ENCODE measurements at regions of chr14 and their contacts with region 1.

Region 1: GRCh38 chr14:64914237-64914971 is at the start of gene CHURC1:
- DNase-seq: peak; percentile 93
- H3K4me3 Mint-ChIP-seq: peak within 1 kb of the TSS; percentile 88
- H3K27ac Mint-ChIP-seq: peak within 1 kb of the TSS; percentile 94
- H3K4me1 Mint-ChIP-seq: peaks cover 51% of the 10 kb centered on the region
- H3K27me3 Mint-ChIP-seq: peaks cover 5% of the 10 kb centered on the region
- total RNA-seq, gene CHURC1: 50.7 and 51.3 TPM in 2 replicates

Region 2: DNA sequence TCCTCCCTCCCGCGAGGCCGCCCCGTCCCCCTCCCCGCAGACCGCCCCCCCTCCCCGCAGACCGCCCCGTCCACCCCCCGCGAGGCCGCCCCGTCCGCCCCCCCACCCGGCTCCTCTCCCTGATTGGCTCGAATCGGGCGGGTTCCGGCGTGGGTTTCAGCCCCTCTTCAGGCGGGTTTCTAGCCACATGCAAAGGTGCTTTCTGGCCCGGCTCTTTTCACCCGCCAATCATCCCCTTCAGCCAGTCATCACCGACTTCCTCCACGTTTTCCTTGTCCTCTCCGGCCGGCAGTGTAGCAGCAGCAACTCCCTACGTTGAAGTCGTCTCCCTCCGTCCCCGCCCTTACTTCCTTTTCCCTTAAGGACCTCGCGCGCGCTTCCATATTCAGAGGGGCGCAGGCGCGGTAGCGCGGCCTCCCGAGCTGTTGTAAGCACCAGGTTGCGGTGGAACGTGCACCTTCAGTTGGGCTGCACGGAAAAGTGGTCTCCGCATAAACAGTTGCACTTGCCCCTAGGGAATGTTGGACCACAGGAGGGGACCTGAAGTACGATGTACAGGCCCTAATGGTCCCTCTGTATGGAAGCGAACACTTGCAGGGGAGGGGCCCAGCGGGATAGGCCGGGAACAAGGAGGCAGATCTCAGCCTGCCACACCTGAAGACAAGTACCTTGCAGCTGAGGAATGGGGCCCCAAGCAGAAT is 575.6 kb before region 1 on chr14:
- intact Hi-C with region 1: loop called (anchors 1 kb)
- DNase-seq: peak; percentile 85
- H3K4me3 Mint-ChIP-seq: peak overlapping the region; percentile 81
- H3K27ac Mint-ChIP-seq: peak overlapping the region; percentile 84
- H3K4me1 Mint-ChIP-seq: peaks cover 29% of the 10 kb centered on the region
- H3K27me3 Mint-ChIP-seq: no peaks in the 10 kb centered on the region

Region 3: GRCh38 chr14:64708148-64709004 is 206.0 kb before region 1 on chr14:
- intact Hi-C with region 1: loop called (anchors 5 kb)
- DNase-seq: peak; percentile 57
- H3K4me3 Mint-ChIP-seq: peak overlapping the region; percentile 47
- H3K27ac Mint-ChIP-seq: peak overlapping the region; percentile 83
- H3K4me1 Mint-ChIP-seq: peaks cover 70% of the 10 kb centered on the region
- H3K27me3 Mint-ChIP-seq: peaks cover 10% of the 10 kb centered on the region

Region 4: GRCh38 chr14:64880221-64881121 is 33.9 kb before region 1 on chr14:
- intact Hi-C with region 1: loop called (anchors 1 kb)
- DNase-seq: peak; percentile 46
- H3K4me3 Mint-ChIP-seq: peak overlapping the region; percentile 79
- H3K27ac Mint-ChIP-seq: no peak overlapping the region
- H3K4me1 Mint-ChIP-seq: no peaks in the 10 kb centered on the region
- H3K27me3 Mint-ChIP-seq: peaks cover 68% of the 10 kb centered on the region

Region 5: DNA sequence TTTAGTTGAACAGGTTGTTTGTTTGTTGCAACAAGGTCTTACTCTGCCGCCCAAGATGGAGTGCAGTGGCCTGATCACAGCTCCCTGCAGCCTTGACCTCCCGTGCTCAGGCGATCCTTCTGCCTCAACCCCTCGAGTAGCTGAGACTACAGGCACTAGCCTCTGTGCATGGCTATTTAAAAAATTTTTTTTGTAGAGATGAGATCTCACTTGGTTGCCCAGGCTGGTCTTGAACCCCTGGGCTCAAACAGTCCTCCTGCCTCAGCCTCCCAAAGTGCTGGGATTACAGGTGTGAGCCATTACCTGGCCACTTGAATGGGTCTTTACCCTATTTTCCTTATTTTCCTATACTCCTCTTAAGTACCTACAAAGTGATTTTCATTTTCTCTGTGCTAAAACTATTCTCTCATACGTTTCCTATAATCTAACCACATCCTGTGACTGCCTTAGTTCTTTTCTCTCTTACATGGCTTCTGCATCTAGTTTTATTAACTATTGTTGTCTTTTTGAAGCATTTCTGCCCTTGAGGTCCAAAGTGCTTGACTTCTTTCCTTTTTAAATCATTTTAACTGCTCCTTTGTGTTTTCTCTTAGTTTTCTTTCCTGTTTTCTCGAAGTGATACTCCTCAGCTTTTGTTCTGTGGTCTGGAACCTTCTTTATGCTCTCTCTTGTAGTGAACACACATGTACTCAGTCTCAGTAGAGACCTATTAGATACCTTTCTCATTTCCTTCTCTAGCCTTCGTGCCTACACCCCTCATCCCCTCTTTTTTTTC is 14.0 kb after region 1 on chr14:
- intact Hi-C with region 1: loop called (anchors 1 kb)
- DNase-seq: no peak
- H3K4me3 Mint-ChIP-seq: no peak overlapping the region
- H3K27ac Mint-ChIP-seq: no peak overlapping the region
- H3K4me1 Mint-ChIP-seq: peaks cover 25% of the 10 kb centered on the region
- H3K27me3 Mint-ChIP-seq: no peaks in the 10 kb centered on the region

Region 6: DNA sequence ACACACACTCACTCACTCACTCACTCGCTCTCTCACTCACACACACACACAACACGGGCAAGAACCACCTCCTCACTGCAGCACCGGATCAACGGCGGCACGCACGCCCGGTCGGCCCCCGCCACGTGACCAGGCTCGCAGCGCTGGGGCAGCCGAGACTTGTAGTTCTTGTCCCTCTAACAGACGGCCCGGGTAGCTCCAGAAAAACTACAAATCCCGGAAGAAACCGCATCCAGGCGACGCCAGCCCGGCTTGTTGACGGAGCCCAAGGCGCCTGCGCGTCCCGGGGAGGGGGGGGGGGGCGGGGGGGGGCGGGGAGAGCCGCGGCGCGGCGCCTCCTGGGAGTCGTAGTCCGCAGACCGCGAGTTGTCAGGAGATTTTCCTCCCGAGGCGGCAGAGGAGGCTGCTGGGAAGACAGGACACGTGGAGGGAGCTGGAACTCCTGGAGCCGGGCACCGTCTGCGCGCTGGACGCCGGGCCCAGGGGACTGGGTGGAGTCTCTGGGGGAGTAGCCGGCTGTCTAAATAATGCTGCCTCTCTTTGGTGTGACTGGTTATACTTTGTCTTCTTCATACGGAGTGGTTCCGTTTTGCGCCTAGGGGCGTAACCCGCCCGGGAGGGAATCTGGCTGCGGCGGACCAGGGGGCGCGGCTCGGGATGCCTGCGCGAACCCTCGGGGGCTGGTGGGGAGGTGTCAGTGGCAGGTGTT is 188.2 kb after region 1 on chr14 and contains the start of gene MAX:
- intact Hi-C with region 1: loop called (anchors 1 kb)
- DNase-seq: peak; percentile 98
- H3K4me3 Mint-ChIP-seq: peak within 1 kb of the TSS; percentile 95
- H3K27ac Mint-ChIP-seq: peak within 1 kb of the TSS; percentile 95
- H3K4me1 Mint-ChIP-seq: peaks cover 33% of the 10 kb centered on the region
- H3K27me3 Mint-ChIP-seq: peaks cover 6% of the 10 kb centered on the region
- total RNA-seq, gene MAX: 135 and 137 TPM in 2 replicates